HCT116 (cell line): ENCODE measurements at regions of chr1 and their contacts with region 1.

Region 1: GRCh38 chr1:220217383-220217988 is 54.8 kb downstream of the RAB3GAP2 start:
- DNase-seq: peak; percentile 4
- ATAC-seq: peak; percentile 80
- H3K4me3 ChIP-seq: no peak overlapping the region
- H3K27ac ChIP-seq: no peak overlapping the region
- H3K4me1 ChIP-seq: no peaks in the 10 kb centered on the region
- H3K27me3 ChIP-seq: no peaks in the 10 kb centered on the region
- CTCF ChIP-seq: peak; percentile 44 to 68 (median 65); a peak in 5 of 6 replicates
- POLR2A ChIP-seq: no peak
- RAD21 ChIP-seq: no peak

Region 2: DNA sequence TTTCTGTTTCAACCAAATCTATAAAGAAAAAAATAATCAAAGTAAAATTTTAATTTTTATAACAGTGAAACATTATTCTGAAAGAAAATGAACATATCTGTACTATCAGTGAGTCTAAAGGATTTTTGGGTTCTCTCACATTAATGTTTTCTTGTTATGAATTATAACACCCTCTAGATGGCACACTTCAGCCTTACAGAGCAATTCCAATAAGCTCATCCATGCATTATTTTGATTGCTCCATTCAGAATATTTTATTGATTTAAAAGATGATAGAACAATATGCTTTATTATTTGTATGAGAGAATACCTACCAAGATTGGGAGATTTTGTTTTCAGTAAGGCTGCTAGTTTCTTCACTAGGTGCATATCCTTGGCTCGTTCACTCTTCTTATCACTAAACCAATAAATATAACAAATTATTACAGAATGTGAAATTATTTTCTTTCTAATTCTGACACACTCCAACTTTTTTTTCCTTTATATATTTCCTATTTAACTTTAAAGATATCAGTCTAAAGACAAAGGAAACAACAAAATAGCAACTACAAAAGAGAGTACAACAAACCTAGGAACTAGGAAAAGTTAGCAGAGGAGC is 27.6 kb before region 1 on chr1:
- CTCF ChIA-PET with region 1: interaction called, 12 read pairs
- POLR2A ChIA-PET with region 1: no interaction called
- RAD21 ChIA-PET with region 1: no interaction called
- intact Hi-C with region 1: no loop called
- DNase-seq: peak; percentile 23
- ATAC-seq: peak; percentile 73
- H3K4me3 ChIP-seq: no peak overlapping the region
- H3K27ac ChIP-seq: no peak overlapping the region
- H3K4me1 ChIP-seq: no peaks in the 10 kb centered on the region
- H3K27me3 ChIP-seq: no peaks in the 10 kb centered on the region
- CTCF ChIP-seq: peak; percentile 41 to 56 (median 44); a peak in 4 of 6 replicates
- POLR2A ChIP-seq: no peak
- RAD21 ChIP-seq: peak; percentile 62